Activated naive CD4-positive, alpha-beta T cell treated with anti-CD3 and anti-CD28 coated beads for 36 hours (primary cell): ENCODE measurements at regions of chr1 and their contacts with region 1.

Region 1: DNA sequence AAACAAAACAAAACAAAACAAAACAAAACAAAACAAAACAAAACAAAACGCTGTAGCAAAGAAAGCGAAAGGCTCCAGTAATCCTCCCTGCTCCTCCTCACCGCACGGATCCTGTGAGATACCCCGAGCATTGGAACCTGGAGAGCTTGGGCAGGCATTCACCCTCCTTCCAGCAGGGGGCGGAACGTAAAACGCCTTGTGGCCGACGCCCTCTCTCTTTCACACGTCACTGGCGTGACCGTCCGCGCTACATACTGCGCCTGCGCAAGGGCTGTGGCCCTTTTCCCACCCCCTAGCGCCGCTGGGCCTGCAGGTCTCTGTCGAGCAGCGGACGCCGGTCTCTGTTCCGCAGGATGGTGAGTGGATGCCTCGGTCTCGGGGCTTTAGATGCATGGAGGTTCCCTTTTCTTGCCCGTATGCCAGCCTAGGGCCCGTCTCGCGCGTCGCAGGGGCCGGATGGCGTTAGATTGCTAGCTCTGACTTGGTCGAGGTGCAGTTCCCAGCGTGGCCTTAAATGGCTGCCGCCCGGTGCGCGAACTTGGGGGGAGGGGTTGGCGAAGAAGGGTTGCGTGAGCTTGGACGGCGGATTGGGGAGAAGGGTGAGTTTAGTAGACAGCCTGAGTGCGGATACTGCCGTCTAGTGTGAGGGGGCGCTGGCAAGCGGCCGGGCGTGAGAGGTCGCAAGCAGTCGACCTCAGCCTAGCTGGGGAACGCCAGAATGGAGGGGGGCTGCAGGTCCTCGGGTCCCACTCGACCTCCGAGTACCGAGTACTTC is at the start of gene RPL5:
- DNase-seq: peak; percentile 98
- H3K4me3 Mint-ChIP-seq: peak within 1 kb of the TSS; percentile 98
- H3K27ac Mint-ChIP-seq: peak within 1 kb of the TSS; percentile 99
- H3K4me1 Mint-ChIP-seq: peaks cover 38% of the 10 kb centered on the region
- H3K27me3 Mint-ChIP-seq: no peaks in the 10 kb centered on the region
- total RNA-seq, gene RPL5: 1,793 to 1,819 TPM

Region 2: DNA sequence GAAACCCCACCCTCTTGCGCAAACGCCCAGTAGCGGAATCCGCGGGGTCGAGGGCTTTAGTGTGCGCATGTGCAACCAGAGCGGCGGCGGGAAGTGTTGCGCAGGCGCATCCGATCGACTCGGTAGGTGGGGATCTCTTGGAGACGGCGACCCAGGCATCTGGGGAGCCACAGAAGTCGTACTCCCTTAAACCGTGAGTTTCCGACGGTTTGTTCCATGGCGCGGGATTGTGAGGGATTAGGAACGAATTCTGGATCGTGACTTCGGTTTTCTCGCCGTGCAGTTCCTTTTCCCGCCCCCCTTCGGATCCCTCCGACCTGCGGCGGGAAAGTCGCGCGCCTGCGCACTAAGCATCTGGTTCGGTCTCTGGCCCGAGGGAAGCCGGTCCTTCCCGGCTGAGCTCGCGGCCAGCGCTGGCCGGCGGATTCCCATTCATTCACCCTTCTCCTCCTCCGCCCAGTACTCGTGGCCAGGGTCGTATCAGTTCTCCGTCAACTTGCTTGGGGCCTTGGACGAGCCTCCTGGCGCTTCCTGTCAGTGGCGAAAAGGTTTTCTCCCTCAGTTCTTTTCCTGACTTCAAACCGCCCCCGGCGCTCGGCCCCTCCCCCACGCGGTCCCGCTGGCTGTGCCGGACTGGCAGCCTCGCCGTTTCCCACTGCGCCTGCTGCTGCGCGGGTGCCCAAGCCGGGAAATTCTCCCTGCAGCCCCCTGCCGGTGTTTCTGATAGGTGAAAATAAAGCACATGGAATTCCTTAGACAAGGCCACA is 1331.0 kb before region 1 on chr1 and contains the start of gene CDC7:
- CTCF ChIA-PET with region 1: no interaction called
- intact Hi-C with region 1: loop called (anchors 10 kb)
- DNase-seq: peak; percentile 87
- H3K4me3 Mint-ChIP-seq: no peak within 1 kb of the TSS
- H3K27ac Mint-ChIP-seq: no peak within 1 kb of the TSS
- H3K4me1 Mint-ChIP-seq: peaks cover 15% of the 10 kb centered on the region
- H3K27me3 Mint-ChIP-seq: no peaks in the 10 kb centered on the region
- total RNA-seq, gene CDC7: 27.0 TPM

Region 3: GRCh38 chr1:92317836-92318493 is 514.0 kb before region 1 on chr1:
- CTCF ChIA-PET with region 1: no interaction called
- intact Hi-C with region 1: loop called (anchors 5 kb)
- DNase-seq: no peak
- H3K4me3 Mint-ChIP-seq: no peak overlapping the region
- H3K27ac Mint-ChIP-seq: no peak overlapping the region
- H3K4me1 Mint-ChIP-seq: peaks cover 55% of the 10 kb centered on the region
- H3K27me3 Mint-ChIP-seq: no peaks in the 10 kb centered on the region

Region 4: GRCh38 chr1:92583821-92584760 is 247.9 kb before region 1 on chr1:
- CTCF ChIA-PET with region 1: no interaction called
- intact Hi-C with region 1: loop called (anchors 5 kb)
- DNase-seq: no peak
- H3K4me3 Mint-ChIP-seq: peak overlapping the region; percentile 45
- H3K27ac Mint-ChIP-seq: peak overlapping the region; percentile 88
- H3K4me1 Mint-ChIP-seq: peaks cover 72% of the 10 kb centered on the region
- H3K27me3 Mint-ChIP-seq: no peaks in the 10 kb centered on the region

Region 5: GRCh38 chr1:92784639-92785500 is 47.1 kb before region 1 on chr1 and contains the start of gene EVI5:
- CTCF ChIA-PET with region 1: no interaction called
- intact Hi-C with region 1: loop called (anchors 1 kb)
- DNase-seq: peak; percentile 58
- H3K4me3 Mint-ChIP-seq: peak within 1 kb of the TSS; percentile 73
- H3K27ac Mint-ChIP-seq: no peak within 1 kb of the TSS
- H3K4me1 Mint-ChIP-seq: peaks cover 13% of the 10 kb centered on the region
- H3K27me3 Mint-ChIP-seq: peaks cover 32% of the 10 kb centered on the region
- total RNA-seq, gene EVI5: 13.8 to 14.0 TPM

Region 6: GRCh38 chr1:92843429-92844352 is 11.7 kb after region 1 on chr1:
- CTCF ChIA-PET with region 1: interaction called, 7 read pairs
- intact Hi-C with region 1: loop called (anchors 1 kb)
- DNase-seq: no peak
- H3K4me3 Mint-ChIP-seq: no peak overlapping the region
- H3K27ac Mint-ChIP-seq: no peak overlapping the region
- H3K4me1 Mint-ChIP-seq: peaks cover 16% of the 10 kb centered on the region
- H3K27me3 Mint-ChIP-seq: no peaks in the 10 kb centered on the region

Region 7: GRCh38 chr1:92968138-92969032 is 136.4 kb after region 1 on chr1:
- CTCF ChIA-PET with region 1: no interaction called
- intact Hi-C with region 1: no loop called
- DNase-seq: peak; percentile 49
- H3K4me3 Mint-ChIP-seq: no peak overlapping the region
- H3K27ac Mint-ChIP-seq: no peak overlapping the region
- H3K4me1 Mint-ChIP-seq: peaks cover 30% of the 10 kb centered on the region
- H3K27me3 Mint-ChIP-seq: no peaks in the 10 kb centered on the region

Region 8: GRCh38 chr1:93179886-93180722 is 348.2 kb after region 1 on chr1 and contains the start of gene TMED5:
- CTCF ChIA-PET with region 1: no interaction called
- intact Hi-C with region 1: loop called (anchors 2 kb)
- DNase-seq: peak; percentile 98
- H3K4me3 Mint-ChIP-seq: peak within 1 kb of the TSS; percentile 88
- H3K27ac Mint-ChIP-seq: peak within 1 kb of the TSS; percentile 99
- H3K4me1 Mint-ChIP-seq: peaks cover 49% of the 10 kb centered on the region
- H3K27me3 Mint-ChIP-seq: no peaks in the 10 kb centered on the region
- total RNA-seq, gene TMED5: 27.8 to 28.2 TPM